ENCODE measurements at regions of chr12 and their contacts with region 1.

Region 1: GRCh38 chr12:111942557-111942956 is 70.4 kb downstream of the TMEM116 start:
- DNase-seq: peak; percentile 50
- H3K4me3 Mint-ChIP-seq: no peak overlapping the region
- H3K27ac Mint-ChIP-seq: no peak overlapping the region
- H3K4me1 Mint-ChIP-seq: peaks cover 7% of the 10 kb centered on the region
- H3K27me3 Mint-ChIP-seq: no peaks in the 10 kb centered on the region
- CTCF ChIP-seq: no peak

Region 2: DNA sequence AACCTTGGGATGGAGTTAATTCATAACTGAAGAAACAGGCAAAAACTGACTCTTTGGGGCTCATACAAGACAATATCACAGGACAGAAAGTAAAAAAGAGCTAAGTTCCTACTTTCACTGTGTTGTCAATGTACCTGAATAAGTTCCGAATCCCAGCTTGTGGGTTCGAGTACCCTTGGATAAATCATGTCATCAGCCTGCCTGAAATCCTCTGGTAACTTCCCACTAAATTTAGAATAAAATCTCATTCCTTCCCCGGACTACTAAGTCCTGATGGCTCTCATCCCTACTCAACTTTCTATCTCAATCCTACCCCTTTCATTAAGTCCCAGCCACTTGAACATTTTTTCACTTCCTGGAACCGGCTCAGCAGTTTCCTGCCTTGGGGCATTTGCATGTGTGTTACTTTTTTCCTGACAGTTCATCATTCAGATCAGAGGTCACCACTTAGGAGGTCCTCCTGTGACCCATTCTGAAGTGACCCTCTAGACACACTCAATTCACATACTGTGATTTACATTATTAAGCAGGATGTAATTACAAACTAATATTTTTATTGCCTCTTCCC is 83.3 kb after region 1 on chr12:
- CTCF ChIA-PET with region 1: no interaction called
- POLR2A ChIA-PET with region 1: interaction called, 3 read pairs
- intact Hi-C with region 1: loop called (anchors 1 kb)
- DNase-seq: no peak
- H3K4me3 Mint-ChIP-seq: no peak overlapping the region
- H3K27ac Mint-ChIP-seq: peak overlapping the region; percentile 73
- H3K4me1 Mint-ChIP-seq: peaks cover 6% of the 10 kb centered on the region
- H3K27me3 Mint-ChIP-seq: no peaks in the 10 kb centered on the region
- CTCF ChIP-seq: no peak

Region 3: DNA sequence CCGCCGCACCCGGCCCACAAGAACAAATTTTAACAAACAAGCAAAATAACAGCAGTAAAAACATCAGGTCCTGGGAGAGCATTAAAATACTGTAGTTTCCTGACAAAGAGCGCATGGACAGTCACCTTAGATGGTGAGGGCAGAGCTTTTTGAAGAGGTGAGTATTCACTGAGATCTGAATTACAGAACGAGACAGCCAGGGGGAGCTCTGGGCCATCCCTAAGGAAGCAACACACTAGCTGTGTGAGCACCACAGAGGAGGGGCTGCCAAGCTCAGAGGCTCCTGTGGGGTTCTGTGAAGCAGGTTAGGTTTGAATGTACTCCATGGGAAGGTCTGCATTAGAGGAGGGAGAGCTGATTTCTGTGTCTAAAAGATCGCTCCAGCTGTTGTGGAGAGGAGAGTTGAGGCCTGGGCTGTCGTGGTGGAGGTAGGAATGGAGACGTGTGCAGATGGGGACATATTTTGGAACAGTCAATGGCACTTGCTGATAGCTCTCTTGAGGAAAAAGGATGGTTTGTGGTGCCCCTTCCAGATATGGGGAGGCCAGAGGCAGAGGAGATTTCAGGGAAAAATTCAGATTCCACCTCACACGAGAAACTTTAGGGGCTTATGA is 255.7 kb after region 1 on chr12:
- CTCF ChIA-PET with region 1: no interaction called
- POLR2A ChIA-PET with region 1: no interaction called
- intact Hi-C with region 1: loop called (anchors 10 kb)
- DNase-seq: peak; percentile 62
- H3K4me3 Mint-ChIP-seq: no peak overlapping the region
- H3K27ac Mint-ChIP-seq: no peak overlapping the region
- H3K4me1 Mint-ChIP-seq: no peaks in the 10 kb centered on the region
- H3K27me3 Mint-ChIP-seq: no peaks in the 10 kb centered on the region
- CTCF ChIP-seq: peak; percentile 68